ENCODE measurements at regions of chr3 and their contacts with region 1.

Region 1: GRCh38 chr3:72353236-72354128 is 494.8 kb downstream of the SHQ1 start:
- DNase-seq: no peak
- H3K4me3 ChIP-seq: no peak overlapping the region
- H3K27ac ChIP-seq: no peak overlapping the region
- H3K4me1 ChIP-seq: no peaks in the 10 kb centered on the region
- H3K27me3 ChIP-seq: no peaks in the 10 kb centered on the region
- CTCF ChIP-seq: no peak
- EP300 ChIP-seq: no peak
- POLR2A ChIP-seq: no peak

Region 2: GRCh38 chr3:72205297-72205826 is 148.1 kb before region 1 on chr3:
- intact Hi-C with region 1: no loop called
- DNase-seq: no peak
- H3K4me3 ChIP-seq: no peak overlapping the region
- H3K27ac ChIP-seq: no peak overlapping the region
- H3K4me1 ChIP-seq: no peaks in the 10 kb centered on the region
- H3K27me3 ChIP-seq: no peaks in the 10 kb centered on the region
- CTCF ChIP-seq: no peak
- EP300 ChIP-seq: no peak
- POLR2A ChIP-seq: no peak

Region 3: DNA sequence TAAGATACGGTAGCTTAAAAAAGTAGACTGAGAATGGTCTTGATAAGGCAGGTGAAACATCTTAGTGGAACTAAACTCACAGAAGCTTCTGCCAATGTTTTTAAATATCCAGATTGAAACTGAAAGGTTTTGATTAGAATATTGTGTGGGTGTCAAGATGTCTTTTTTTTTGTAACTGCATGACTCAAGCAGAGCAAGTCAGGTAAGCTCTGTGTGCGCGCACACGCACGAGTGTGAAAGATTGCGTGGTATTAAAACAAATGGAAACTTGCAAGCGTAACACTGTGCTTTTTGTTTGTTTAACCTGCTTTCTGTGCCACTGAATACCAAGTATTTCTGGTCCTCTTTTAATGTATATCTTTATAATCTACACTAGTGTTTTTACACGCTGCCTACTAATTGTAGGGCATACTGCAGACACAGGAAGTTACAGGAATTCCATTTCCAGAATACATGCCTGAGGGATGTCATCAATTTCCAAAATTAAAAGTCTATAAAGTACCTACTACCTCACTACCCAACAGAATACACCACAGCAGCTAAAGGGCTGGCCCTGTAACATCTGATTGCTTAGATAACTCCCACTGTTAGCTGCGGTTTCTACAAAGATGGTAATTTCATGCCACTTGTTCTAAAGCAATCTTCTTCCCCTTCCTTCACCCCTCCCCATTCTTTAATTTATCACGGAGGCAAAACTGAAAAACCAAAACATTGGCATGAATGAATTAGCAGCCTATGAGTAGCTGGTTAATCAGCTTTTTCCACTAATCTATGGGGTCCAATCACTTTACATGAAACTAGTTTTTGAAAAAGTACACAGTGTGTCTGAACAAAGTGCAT is 22.0 kb after region 1 on chr3:
- intact Hi-C with region 1: loop called in 2 of 4 experiments (anchors 1 to 2 kb)
- DNase-seq: no peak
- H3K4me3 ChIP-seq: no peak overlapping the region
- H3K27ac ChIP-seq: no peak overlapping the region
- H3K4me1 ChIP-seq: peaks cover 1% of the 10 kb centered on the region
- H3K27me3 ChIP-seq: no peaks in the 10 kb centered on the region
- CTCF ChIP-seq: no peak
- EP300 ChIP-seq: no peak
- POLR2A ChIP-seq: no peak

Region 4: GRCh38 chr3:73024836-73025235 is 671.4 kb after region 1 on chr3:
- intact Hi-C with region 1: loop called in 1 of 4 experiments (anchors 5 kb)
- DNase-seq: no peak
- H3K4me3 ChIP-seq: no peak overlapping the region
- H3K27ac ChIP-seq: no peak overlapping the region
- H3K4me1 ChIP-seq: peaks cover 9% of the 10 kb centered on the region
- H3K27me3 ChIP-seq: peaks cover 3% of the 10 kb centered on the region
- CTCF ChIP-seq: no peak
- EP300 ChIP-seq: no peak
- POLR2A ChIP-seq: no peak

Measured in ovary (tissue), 10 donors.